ENCODE measurements at regions of chr2 and their contacts with region 1.

Region 1: GRCh38 chr2:226583715-226584114 is 215.9 kb downstream of the IRS1 start:
- DNase-seq: no peak
- H3K4me3 Mint-ChIP-seq: peak overlapping the region; percentile 19
- H3K27ac Mint-ChIP-seq: peak overlapping the region; percentile 73
- H3K4me1 Mint-ChIP-seq: peaks cover 57% of the 10 kb centered on the region
- H3K27me3 Mint-ChIP-seq: no peaks in the 10 kb centered on the region
- CTCF ChIP-seq: no peak

Region 2: GRCh38 chr2:226118471-226119430 is 465.0 kb before region 1 on chr2:
- CTCF ChIA-PET with region 1: no interaction called
- intact Hi-C with region 1: loop called (anchors 5 kb)
- DNase-seq: peak; percentile 10
- H3K4me3 Mint-ChIP-seq: peak overlapping the region; percentile 25
- H3K27ac Mint-ChIP-seq: peak overlapping the region; percentile 67
- H3K4me1 Mint-ChIP-seq: peaks cover 43% of the 10 kb centered on the region
- H3K27me3 Mint-ChIP-seq: no peaks in the 10 kb centered on the region
- CTCF ChIP-seq: no peak

Region 3: DNA sequence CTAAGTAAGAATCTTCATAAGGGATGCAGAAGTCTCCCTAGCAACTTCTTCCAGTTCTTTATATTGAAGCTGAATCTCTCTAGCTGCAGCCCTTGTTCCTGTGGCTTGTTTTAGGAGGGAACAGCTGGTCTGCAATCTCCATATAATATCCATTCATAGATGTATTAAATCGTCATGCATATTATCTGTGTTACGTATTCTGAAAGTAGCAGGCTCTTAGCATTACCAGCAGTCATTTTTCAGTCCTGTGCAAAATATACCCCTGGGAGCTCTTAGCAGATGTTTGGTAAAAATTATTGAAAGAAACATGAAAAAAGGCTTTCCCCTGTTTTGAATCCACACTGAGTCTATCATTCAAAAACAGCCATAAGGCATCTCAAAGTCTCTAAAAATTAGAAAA is 169.4 kb before region 1 on chr2:
- CTCF ChIA-PET with region 1: no interaction called
- intact Hi-C with region 1: no loop called
- DNase-seq: no peak
- H3K4me3 Mint-ChIP-seq: no peak overlapping the region
- H3K27ac Mint-ChIP-seq: peak overlapping the region; percentile 6
- H3K4me1 Mint-ChIP-seq: peaks cover 33% of the 10 kb centered on the region
- H3K27me3 Mint-ChIP-seq: no peaks in the 10 kb centered on the region
- CTCF ChIP-seq: no peak

Region 4: GRCh38 chr2:226514939-226515338 is 68.8 kb before region 1 on chr2:
- CTCF ChIA-PET with region 1: no interaction called
- intact Hi-C with region 1: loop called (anchors 5 kb)
- DNase-seq: no peak
- H3K4me3 Mint-ChIP-seq: no peak overlapping the region
- H3K27ac Mint-ChIP-seq: peak overlapping the region; percentile 37
- H3K4me1 Mint-ChIP-seq: peaks cover 19% of the 10 kb centered on the region
- H3K27me3 Mint-ChIP-seq: no peaks in the 10 kb centered on the region
- CTCF ChIP-seq: no peak

Region 5: DNA sequence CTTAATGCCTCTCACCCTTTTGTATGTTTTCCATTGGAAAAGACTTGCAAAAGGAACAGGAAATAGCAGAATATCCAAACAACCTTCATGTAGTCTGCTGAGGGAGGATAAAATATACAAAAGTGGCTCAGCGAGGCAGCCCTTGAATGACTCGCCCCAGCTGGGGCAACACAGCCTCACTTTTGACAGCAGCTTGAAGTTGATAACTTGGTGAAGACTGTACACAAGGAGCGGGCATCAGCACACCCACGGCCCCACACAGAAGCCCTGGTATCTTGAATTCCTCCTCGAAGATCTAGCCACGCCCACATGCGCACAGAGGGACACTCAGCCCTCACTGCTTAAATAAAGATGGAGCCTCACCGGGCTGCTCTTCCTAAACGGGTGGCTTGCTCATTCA is 54.9 kb after region 1 on chr2:
- CTCF ChIA-PET with region 1: no interaction called
- intact Hi-C with region 1: loop called (anchors 1 kb)
- DNase-seq: peak; percentile 9
- H3K4me3 Mint-ChIP-seq: no peak overlapping the region
- H3K27ac Mint-ChIP-seq: no peak overlapping the region
- H3K4me1 Mint-ChIP-seq: peaks cover 17% of the 10 kb centered on the region
- H3K27me3 Mint-ChIP-seq: no peaks in the 10 kb centered on the region
- CTCF ChIP-seq: no peak

Measured in Calu3 (cell line).